IMR-90 (cell line): ENCODE measurements at regions of chr7 and their contacts with region 1.

Region 1: GRCh38 chr7:56063882-56064625 is at the start of gene SUMF2:
- DNase-seq: peak; percentile 83
- ATAC-seq: peak; percentile 93
- H3K4me3 ChIP-seq: peak within 1 kb of the TSS; percentile 81
- H3K27ac ChIP-seq: peak within 1 kb of the TSS; percentile 87
- H3K4me1 ChIP-seq: peaks cover 9% of the 10 kb centered on the region
- H3K27me3 ChIP-seq: no peaks in the 10 kb centered on the region
- CTCF ChIP-seq: peak; percentile 22; the same call in 1 of the 2 replicates
- POLR2A ChIP-seq: peak; percentile 64
- RAD21 ChIP-seq: no peak
- total RNA-seq, gene SUMF2: 93.0 and 97.3 TPM in 2 replicates

Region 2: GRCh38 chr7:55887821-55888247 is 176.2 kb before region 1 on chr7:
- CTCF ChIA-PET with region 1: no interaction called
- POLR2A ChIA-PET with region 1: no interaction called
- dilution Hi-C with region 1: no loop called
- in situ Hi-C with region 1: no loop called
- intact Hi-C with region 1: no loop called
- DNase-seq: no peak
- ATAC-seq: no peak
- H3K4me3 ChIP-seq: peak overlapping the region; percentile 66
- H3K27ac ChIP-seq: no peak overlapping the region
- H3K4me1 ChIP-seq: no peaks in the 10 kb centered on the region
- H3K27me3 ChIP-seq: no peaks in the 10 kb centered on the region
- CTCF ChIP-seq: no peak
- POLR2A ChIP-seq: no peak
- RAD21 ChIP-seq: no peak

Region 3: GRCh38 chr7:56033671-56034432 is 30.2 kb before region 1 on chr7:
- CTCF ChIA-PET with region 1: no interaction called
- POLR2A ChIA-PET with region 1: no interaction called
- dilution Hi-C with region 1: no loop called
- in situ Hi-C with region 1: no loop called
- intact Hi-C with region 1: loop called (anchors 5 kb)
- DNase-seq: peak; percentile 70
- ATAC-seq: peak; percentile 91
- H3K4me3 ChIP-seq: peak overlapping the region; percentile 80
- H3K27ac ChIP-seq: peak overlapping the region; percentile 68
- H3K4me1 ChIP-seq: peaks cover 6% of the 10 kb centered on the region
- H3K27me3 ChIP-seq: no peaks in the 10 kb centered on the region
- CTCF ChIP-seq: peak; percentile 30; the same call in 1 of the 2 replicates
- POLR2A ChIP-seq: no peak
- RAD21 ChIP-seq: peak; percentile 29

Region 4: DNA sequence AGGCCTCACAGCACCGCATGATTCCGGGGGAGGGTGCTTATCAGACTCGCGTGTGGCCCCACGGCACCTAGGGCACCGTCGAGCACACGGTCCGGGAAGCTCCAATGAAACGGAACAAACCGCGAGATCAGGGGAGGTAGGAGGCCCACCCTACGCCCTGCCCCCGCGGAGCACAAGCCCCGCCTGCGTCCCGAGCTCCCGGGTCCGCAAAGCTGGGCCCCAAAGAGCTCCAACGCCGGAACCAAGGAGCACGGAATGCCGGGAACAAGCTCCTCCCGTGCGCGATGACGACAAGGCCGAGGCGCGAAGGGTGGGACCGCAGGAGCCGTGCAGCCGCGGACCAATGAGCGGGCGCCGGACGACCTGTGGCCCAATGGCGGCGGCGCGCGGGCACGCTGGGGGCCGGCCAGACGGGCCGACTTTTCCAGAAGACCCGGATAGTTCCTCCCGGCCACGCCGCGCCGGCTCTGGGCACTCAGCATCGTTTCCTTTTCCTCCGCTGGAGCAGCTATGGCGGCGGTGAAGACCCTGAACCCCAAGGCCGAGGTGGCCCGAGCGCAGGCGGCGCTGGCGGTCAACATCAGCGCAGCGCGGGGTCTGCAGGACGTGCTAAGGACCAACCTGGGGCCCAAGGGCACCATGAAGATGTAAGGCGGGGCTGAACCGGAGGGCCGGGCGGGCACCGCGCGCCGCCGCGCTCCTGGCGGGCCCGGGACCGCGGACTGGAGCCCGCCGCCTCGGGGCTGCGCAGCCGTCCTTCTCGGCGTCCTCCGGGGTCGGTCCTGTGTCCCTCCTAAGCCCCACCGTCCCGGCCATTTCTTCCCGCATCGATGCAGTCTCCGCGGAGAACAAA is 12.5 kb before region 1 on chr7 and contains the starts of genes CCT6A and PSPH:
- CTCF ChIA-PET with region 1: interaction called, 3 read pairs
- POLR2A ChIA-PET with region 1: interaction called, 7 read pairs
- dilution Hi-C with region 1: no loop called
- in situ Hi-C with region 1: no loop called
- intact Hi-C with region 1: loop called (anchors 1 kb)
- DNase-seq: peak; percentile 98
- ATAC-seq: peak; percentile 95
- H3K4me3 ChIP-seq: peak within 1 kb of the TSS; percentile 81
- H3K27ac ChIP-seq: peak within 1 kb of the TSS; percentile 92
- H3K4me1 ChIP-seq: peaks cover 7% of the 10 kb centered on the region; the same call in 1 of the 2 replicates
- H3K27me3 ChIP-seq: no peaks in the 10 kb centered on the region
- CTCF ChIP-seq: no peak
- POLR2A ChIP-seq: peak; percentile 88
- RAD21 ChIP-seq: no peak
- total RNA-seq, gene CCT6A: 265 and 311 TPM in 2 replicates
- total RNA-seq, gene PSPH: 48.4 and 55.8 TPM in 2 replicates

Region 5: GRCh38 chr7:56083150-56083785 is 19.2 kb after region 1 on chr7:
- CTCF ChIA-PET with region 1: interaction called, 3 read pairs
- POLR2A ChIA-PET with region 1: interaction called, 22 read pairs
- dilution Hi-C with region 1: no loop called
- in situ Hi-C with region 1: no loop called
- intact Hi-C with region 1: no loop called
- DNase-seq: no peak
- ATAC-seq: no peak
- H3K4me3 ChIP-seq: no peak overlapping the region
- H3K27ac ChIP-seq: no peak overlapping the region
- H3K4me1 ChIP-seq: peaks cover 7% of the 10 kb centered on the region
- H3K27me3 ChIP-seq: no peaks in the 10 kb centered on the region
- CTCF ChIP-seq: no peak
- POLR2A ChIP-seq: no peak
- RAD21 ChIP-seq: no peak

Region 6: DNA sequence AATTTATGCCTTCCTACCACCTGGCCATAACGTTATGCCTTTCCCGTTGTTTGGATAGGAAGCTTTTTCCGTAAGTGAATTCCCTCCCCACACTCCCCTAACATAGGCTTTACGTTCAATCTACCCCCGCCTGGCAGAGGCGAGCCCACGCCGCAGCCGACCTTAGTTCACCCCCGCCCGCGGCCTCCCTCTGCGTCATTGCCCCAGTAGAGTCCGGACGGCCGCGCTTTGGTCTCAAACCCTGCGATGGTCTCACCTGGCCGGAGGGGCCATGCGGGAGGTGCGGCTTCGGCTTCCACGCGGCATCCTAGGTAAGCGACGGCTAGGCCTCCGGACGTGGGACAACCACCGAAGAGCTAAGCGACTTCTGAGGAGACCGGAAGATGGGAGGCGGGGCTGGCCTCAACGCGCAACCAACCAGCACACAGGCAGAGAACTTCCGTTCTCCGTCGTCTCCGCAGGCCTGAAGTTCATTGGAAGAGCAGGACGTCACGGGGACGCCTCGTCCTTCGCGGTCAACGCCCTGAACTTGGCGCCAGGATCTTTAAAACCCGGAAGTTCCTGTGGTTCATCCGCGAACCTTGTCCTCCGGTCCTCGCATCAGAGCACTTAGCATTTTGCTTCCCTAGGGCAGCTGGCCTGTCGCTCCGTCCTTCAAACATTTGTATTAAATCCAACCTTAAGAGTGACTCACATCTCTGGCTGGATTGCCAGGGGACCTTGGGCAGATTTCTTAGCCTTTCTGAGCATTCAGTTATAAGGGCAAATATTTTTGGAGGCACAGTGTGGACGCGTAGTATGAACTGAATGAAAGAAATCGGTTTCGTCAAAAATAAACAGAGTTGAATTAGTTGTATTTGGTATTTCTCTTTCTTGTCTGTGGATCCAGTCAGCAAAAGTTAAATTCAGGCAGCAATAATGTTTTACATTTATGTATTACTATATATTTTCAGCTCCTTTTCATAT is 42.3 kb after region 1 on chr7 and contains the start of gene CHCHD2:
- CTCF ChIA-PET with region 1: no interaction called
- POLR2A ChIA-PET with region 1: interaction called, 10 read pairs
- dilution Hi-C with region 1: no loop called
- in situ Hi-C with region 1: no loop called
- intact Hi-C with region 1: no loop called
- DNase-seq: peak; percentile 99
- ATAC-seq: peak; percentile 99
- H3K4me3 ChIP-seq: peak within 1 kb of the TSS; percentile 70
- H3K27ac ChIP-seq: peak within 1 kb of the TSS; percentile 76
- H3K4me1 ChIP-seq: no peaks in the 10 kb centered on the region
- H3K27me3 ChIP-seq: no peaks in the 10 kb centered on the region
- CTCF ChIP-seq: no peak
- POLR2A ChIP-seq: peak; percentile 85
- RAD21 ChIP-seq: no peak
- total RNA-seq, gene CHCHD2: 423 and 532 TPM in 2 replicates